Adrenal gland (tissue), 19 donors: ENCODE measurements at regions of chr1 and their contacts with region 1.

Region 1: DNA sequence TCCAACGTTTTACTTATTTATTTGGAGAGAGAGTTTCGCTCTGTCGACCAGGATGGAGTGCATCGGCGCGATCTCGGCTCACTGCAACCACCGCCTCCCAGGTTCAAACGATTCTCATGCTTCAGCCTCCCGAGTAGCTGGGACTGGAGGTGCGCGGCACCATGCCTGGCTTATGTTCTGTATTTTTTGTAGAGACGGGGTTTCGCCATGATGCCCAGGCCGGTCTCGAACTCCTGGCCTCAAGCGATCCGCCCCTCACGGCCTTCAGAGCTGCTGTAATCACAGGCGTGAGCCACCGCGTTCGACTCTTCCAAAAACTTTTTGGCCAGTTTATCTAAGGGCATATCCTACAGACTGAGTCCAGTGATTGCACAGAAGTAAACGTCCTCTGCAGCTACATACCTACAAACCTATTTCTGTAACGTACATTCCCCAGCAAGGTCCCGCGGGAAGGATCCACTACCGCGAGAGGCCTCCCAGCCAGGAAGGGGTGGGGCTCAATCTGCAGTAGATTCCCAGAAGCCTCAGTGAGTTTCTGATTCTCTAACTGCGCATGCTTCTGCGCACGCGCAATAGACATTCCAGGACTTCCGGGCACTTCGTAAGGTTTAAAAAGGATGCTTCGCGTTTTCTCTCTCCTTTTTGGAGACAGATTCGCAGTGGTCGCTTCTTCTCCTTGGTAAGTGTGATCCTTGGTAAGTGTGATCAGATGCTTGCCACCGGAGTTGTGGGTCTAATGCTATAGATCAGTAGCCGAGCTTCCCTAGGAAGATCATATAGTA is at the start of gene RCC1:
- DNase-seq: peak; percentile 96 to 99 (median 98)
- H3K4me3 ChIP-seq: peak within 1 kb of the TSS; percentile 39 to 89 (median 86)
- H3K27ac ChIP-seq: peak within 1 kb of the TSS; percentile 40 to 89 (median 72)
- H3K4me1 ChIP-seq: peaks cover 25 to 40% of the 10 kb centered on the region in 2 donors
- H3K27me3 ChIP-seq: no peaks in the 10 kb centered on the region
- CTCF ChIP-seq: no peak
- POLR2A ChIP-seq: peak; percentile 96 to 99
- total RNA-seq, gene RCC1: 12.6 to 24.4 (median 16.9) TPM

Region 2: GRCh38 chr1:28417429-28417922 is 88.1 kb before region 1 on chr1:
- intact Hi-C with region 1: loop called (anchors 5 to 10 kb)
- DNase-seq: peak; percentile 38 to 83 (median 60)
- H3K4me3 ChIP-seq: no peak overlapping the region
- H3K27ac ChIP-seq: peak overlapping the region in 1 of 5 donors; percentile 51
- H3K4me1 ChIP-seq: peaks cover 20 to 26% of the 10 kb centered on the region in 2 donors
- H3K27me3 ChIP-seq: no peaks in the 10 kb centered on the region
- CTCF ChIP-seq: no peak
- POLR2A ChIP-seq: no peak